ENCODE measurements at regions of chr1 and their contacts with region 1.

Region 1: DNA sequence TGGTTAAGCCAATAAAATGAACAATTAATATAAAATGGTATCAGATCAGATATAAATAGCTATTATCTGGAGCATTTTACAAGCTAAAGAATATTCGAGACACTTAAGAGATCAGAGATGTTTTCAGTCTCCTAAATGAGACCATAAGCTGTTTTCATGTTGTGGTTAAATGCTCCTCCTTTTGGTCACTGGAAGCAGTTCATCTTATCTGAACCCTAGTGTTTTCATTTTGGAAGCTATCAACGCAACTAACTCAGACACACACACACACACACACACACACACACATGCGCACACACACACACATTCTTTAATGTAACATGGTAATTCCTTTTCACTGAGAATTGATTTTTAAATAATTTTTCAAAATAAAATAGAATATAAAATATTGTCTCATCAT is 10.0 kb upstream of the LRRC8C start:
- DNase-seq: peak; percentile 35 to 56 (median 43)
- H3K4me3 ChIP-seq: no peak overlapping the region
- H3K4me3 Mint-ChIP-seq: peak overlapping the region in 2 of 8 donors; percentile 36 to 49
- H3K27ac ChIP-seq: no peak overlapping the region
- H3K27ac Mint-ChIP-seq: peak overlapping the region in 5 of 7 donors; percentile 60 to 95 (median 70)
- H3K4me1 ChIP-seq: peaks cover 54% of the 10 kb centered on the region
- H3K4me1 Mint-ChIP-seq: peaks cover 41 to 75% (median 54%) of the 10 kb centered on the region in 4 donors
- H3K27me3 ChIP-seq: no peaks in the 10 kb centered on the region
- H3K27me3 Mint-ChIP-seq: no peaks in the 10 kb centered on the region

Region 2: DNA sequence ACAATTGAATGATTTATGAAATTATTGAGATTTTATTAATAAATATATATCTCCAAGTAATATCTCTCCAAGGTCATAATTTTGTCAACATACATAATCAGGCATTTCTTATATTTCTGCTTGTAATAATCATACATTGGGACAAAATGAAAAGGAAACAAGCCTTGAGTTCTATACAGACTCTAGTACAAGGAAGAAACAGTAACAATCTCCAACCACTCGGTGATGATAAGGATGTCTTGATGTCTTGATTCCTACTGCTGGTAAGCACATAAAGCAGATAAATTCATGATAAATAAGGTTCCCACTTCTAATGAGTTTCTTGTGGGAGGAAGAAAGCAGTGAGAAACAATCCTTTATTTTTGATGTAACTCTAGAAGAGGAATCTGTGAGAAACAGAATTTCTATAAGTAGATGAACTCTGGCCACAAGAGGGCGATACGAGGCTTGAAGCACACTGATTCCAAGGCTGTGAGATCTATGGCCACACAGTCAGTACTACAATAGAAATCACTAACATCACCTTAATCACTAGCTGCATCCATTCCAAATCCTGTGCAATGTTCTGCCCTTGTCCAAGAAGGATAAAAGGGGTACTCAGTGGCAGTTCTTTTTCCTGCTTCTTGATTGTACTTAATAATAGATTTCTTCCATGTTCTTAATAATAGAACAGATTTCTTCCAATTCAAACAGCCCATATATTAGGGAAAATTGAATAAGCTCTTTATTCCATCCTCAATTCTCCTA is 139.7 kb before region 1 on chr1:
- CTCF ChIA-PET with region 1: interaction called, 44 read pairs
- POLR2A ChIA-PET with region 1: interaction called, 7 read pairs
- intact Hi-C with region 1: loop called (anchors 1 kb)
- DNase-seq: peak; percentile 63 to 79 (median 68)
- H3K4me3 ChIP-seq: no peak overlapping the region
- H3K4me3 Mint-ChIP-seq: no peak overlapping the region
- H3K27ac ChIP-seq: no peak overlapping the region
- H3K27ac Mint-ChIP-seq: no peak overlapping the region
- H3K4me1 ChIP-seq: no peaks in the 10 kb centered on the region
- H3K4me1 Mint-ChIP-seq: peaks cover 0 to 10% (median 10%) of the 10 kb centered on the region in 4 donors
- H3K27me3 ChIP-seq: no peaks in the 10 kb centered on the region
- H3K27me3 Mint-ChIP-seq: no peaks in the 10 kb centered on the region

Region 3: DNA sequence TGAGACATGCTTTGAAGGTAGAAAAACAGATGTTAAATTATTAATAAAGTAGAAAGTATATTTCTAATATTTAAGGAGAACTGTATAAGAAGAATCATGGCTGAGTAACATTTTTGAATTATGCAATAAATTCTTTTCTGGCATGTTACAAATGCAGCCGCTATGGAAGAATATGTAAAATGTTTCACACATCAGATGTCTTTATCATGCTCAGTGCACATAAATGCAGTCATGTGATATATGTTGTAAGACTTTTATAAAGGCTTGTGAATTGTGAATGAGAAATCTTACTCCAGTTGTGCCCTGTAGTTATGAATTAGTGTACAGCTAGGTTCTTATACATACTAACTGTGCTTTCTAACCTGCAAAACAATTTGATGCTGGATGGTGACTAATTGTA is 44.7 kb before region 1 on chr1:
- CTCF ChIA-PET with region 1: interaction called, 59 read pairs
- POLR2A ChIA-PET with region 1: interaction called, 8 read pairs
- intact Hi-C with region 1: loop called (anchors 1 kb)
- DNase-seq: no peak
- H3K4me3 ChIP-seq: no peak overlapping the region
- H3K4me3 Mint-ChIP-seq: no peak overlapping the region
- H3K27ac ChIP-seq: no peak overlapping the region
- H3K27ac Mint-ChIP-seq: no peak overlapping the region
- H3K4me1 ChIP-seq: no peaks in the 10 kb centered on the region
- H3K4me1 Mint-ChIP-seq: peaks cover 0 to 7% (median 4%) of the 10 kb centered on the region in 4 donors
- H3K27me3 ChIP-seq: no peaks in the 10 kb centered on the region
- H3K27me3 Mint-ChIP-seq: no peaks in the 10 kb centered on the region

Region 4: DNA sequence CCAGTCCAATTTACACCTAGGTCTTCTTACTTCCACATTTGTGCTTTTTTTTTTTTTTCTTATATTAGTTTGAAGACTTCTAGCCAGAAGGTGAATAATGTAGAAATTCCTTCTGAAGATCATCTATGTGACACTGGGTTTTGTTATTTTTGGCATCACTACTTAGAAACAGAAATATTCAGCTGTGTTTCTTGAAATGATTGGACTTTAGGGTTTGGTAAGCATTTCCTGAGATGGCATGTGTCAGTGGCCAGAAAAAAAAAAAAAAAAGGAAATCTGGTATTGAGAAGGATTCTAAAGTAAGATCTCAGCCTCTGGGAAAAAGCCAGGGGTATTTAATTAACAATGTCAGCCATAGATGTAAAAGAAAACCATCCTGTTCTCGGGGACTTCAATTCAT is 33.4 kb before region 1 on chr1:
- CTCF ChIA-PET with region 1: interaction called, 688 read pairs
- POLR2A ChIA-PET with region 1: interaction called, 3 read pairs
- intact Hi-C with region 1: no loop called
- DNase-seq: no peak
- H3K4me3 ChIP-seq: no peak overlapping the region
- H3K4me3 Mint-ChIP-seq: no peak overlapping the region
- H3K27ac ChIP-seq: no peak overlapping the region
- H3K27ac Mint-ChIP-seq: peak overlapping the region in 3 of 7 donors; percentile 4 to 24 (median 6)
- H3K4me1 ChIP-seq: peaks cover 23% of the 10 kb centered on the region
- H3K4me1 Mint-ChIP-seq: peaks cover 35 to 48% (median 42%) of the 10 kb centered on the region in 4 donors
- H3K27me3 ChIP-seq: no peaks in the 10 kb centered on the region
- H3K27me3 Mint-ChIP-seq: no peaks in the 10 kb centered on the region

Region 5: GRCh38 chr1:89598450-89599331 is 24.2 kb before region 1 on chr1:
- CTCF ChIA-PET with region 1: interaction called, 688 read pairs
- POLR2A ChIA-PET with region 1: interaction called, 813 read pairs
- intact Hi-C with region 1: loop called (anchors 1 kb)
- DNase-seq: peak in 4 of 5 donors; percentile 32 to 49 (median 38)
- H3K4me3 ChIP-seq: no peak overlapping the region
- H3K4me3 Mint-ChIP-seq: peak overlapping the region in 5 of 8 donors; percentile 37 to 79 (median 45)
- H3K27ac ChIP-seq: no peak overlapping the region
- H3K27ac Mint-ChIP-seq: peak overlapping the region; percentile 19 to 81 (median 71)
- H3K4me1 ChIP-seq: peaks cover 64% of the 10 kb centered on the region
- H3K4me1 Mint-ChIP-seq: peaks cover 55 to 82% (median 74%) of the 10 kb centered on the region in 4 donors
- H3K27me3 ChIP-seq: no peaks in the 10 kb centered on the region
- H3K27me3 Mint-ChIP-seq: no peaks in the 10 kb centered on the region

Measured in CD4-positive, alpha-beta memory T cell (primary cell).